AG04450 (cell line): ENCODE measurements at regions of chr2 and their contacts with region 1.

Region 1: GRCh38 chr2:201697899-201698298 is 545 bp downstream of the MPP4 start:
- DNase-seq: peak; percentile 59
- H3K4me3 ChIP-seq: no peak overlapping the region; the same call in 1 of the 2 replicates
- H3K27ac ChIP-seq: peak overlapping the region; percentile 47
- H3K27me3 ChIP-seq: no peaks in the 10 kb centered on the region
- CTCF ChIP-seq: no peak

Region 2: GRCh38 chr2:201654616-201655384 is 43.1 kb before region 1 on chr2:
- CTCF ChIA-PET with region 1: no interaction called
- POLR2A ChIA-PET with region 1: interaction called, 10 read pairs
- DNase-seq: peak; percentile 67
- H3K4me3 ChIP-seq: no peak overlapping the region; the same call in 1 of the 2 replicates
- H3K27ac ChIP-seq: peak overlapping the region; percentile 92
- H3K27me3 ChIP-seq: no peaks in the 10 kb centered on the region
- CTCF ChIP-seq: no peak

Region 3: DNA sequence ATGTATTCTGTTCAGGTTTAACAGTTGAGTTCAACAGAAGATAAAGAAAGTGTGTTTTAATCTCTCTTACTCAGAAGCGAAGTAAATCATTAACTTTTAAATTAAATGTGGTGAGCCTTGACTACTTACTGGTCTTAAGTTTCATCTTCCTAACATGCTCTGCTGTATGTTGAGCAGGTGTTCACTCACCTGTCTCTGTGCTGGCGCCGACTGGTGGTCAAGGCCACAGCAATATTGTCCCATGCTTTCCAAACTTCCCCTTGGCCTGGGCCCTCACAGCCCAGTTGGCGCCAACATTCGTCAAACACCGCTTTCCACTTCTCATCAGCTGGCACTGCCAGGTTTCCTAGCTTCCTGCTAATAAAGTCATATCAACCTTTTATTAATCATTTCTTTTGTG is 17.6 kb after region 1 on chr2:
- CTCF ChIA-PET with region 1: no interaction called
- POLR2A ChIA-PET with region 1: no interaction called
- DNase-seq: no peak
- H3K4me3 ChIP-seq: no peak overlapping the region
- H3K27ac ChIP-seq: no peak overlapping the region
- H3K27me3 ChIP-seq: no peaks in the 10 kb centered on the region
- CTCF ChIP-seq: no peak